Mammary epithelial cell (primary cell): ENCODE measurements at regions of chr1 and their contacts with region 1.

Region 1: GRCh38 chr1:183609313-183609712 is 19.1 kb upstream of the NCF2 start:
- DNase-seq: peak; percentile 69
- H3K4me3 ChIP-seq: no peak overlapping the region
- H3K27ac ChIP-seq: peak overlapping the region; percentile 83
- H3K4me1 ChIP-seq: peaks cover 35% of the 10 kb centered on the region
- H3K27me3 ChIP-seq: no peaks in the 10 kb centered on the region
- CTCF ChIP-seq: peak; percentile 24 to 48

Region 2: GRCh38 chr1:183635606-183636333 is 26.5 kb after region 1 on chr1 and contains the start of gene ARPC5:
- CTCF ChIA-PET with region 1: no interaction called
- dilution Hi-C with region 1: no loop called
- in situ Hi-C with region 1: no loop called
- intact Hi-C with region 1: loop called (anchors 1 kb)
- DNase-seq: peak; percentile 99
- H3K4me3 ChIP-seq: peak within 1 kb of the TSS; percentile 85 to 95 (median 90)
- H3K27ac ChIP-seq: peak within 1 kb of the TSS; percentile 82
- H3K4me1 ChIP-seq: peaks cover 25% of the 10 kb centered on the region
- H3K27me3 ChIP-seq: no peaks in the 10 kb centered on the region
- CTCF ChIP-seq: no peak
- total RNA-seq, gene ARPC5: 162 to 186 TPM